GM10248 (cell line): ENCODE measurements at regions of chr2 and their contacts with region 1.

Region 1: DNA sequence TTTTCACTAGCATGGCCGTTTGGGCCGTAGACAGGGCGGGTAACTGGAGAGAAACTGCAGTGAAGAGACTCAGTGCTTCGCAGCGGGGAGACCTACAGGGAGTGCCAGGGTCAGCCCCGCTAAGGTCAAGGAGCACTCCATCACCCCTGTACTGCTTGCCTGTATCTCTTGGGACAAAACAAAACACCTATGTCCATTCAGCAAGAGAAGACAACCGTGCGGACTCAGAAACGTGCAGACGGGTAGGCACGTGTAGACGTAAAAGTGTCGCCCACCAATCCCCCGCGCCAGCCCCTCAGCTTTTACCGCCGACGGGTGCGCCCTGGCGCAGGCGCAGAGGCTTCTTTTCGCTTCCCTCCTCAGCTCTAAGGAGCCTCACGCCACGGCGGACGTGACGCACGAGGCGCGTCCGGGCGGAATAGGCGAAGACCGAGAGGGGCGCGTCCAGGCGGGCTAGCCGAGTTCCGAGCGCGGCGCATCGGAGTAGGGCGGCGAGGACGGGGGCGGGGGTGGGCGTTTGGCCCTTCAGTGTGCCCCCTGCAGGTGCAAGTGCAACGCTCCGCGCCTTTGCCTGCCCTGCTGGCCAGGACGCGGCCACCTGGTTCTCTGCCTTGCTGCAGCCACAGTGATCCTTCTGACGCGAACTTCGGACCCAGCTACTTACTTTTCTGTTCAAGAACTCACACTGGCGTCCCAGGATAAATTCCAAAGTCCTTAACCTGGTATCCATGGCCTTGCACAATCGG is 3.3 kb upstream of the SOS1 start:
- DNase-seq: peak; percentile 90
- CTCF ChIP-seq: peak; percentile 61

Region 2: GRCh38 chr2:39059366-39059952 is 64.7 kb before region 1 on chr2:
- CTCF ChIA-PET with region 1: interaction called, 11 read pairs
- POLR2A ChIA-PET with region 1: no interaction called
- DNase-seq: peak; percentile 39
- CTCF ChIP-seq: peak; percentile 62

Region 3: DNA sequence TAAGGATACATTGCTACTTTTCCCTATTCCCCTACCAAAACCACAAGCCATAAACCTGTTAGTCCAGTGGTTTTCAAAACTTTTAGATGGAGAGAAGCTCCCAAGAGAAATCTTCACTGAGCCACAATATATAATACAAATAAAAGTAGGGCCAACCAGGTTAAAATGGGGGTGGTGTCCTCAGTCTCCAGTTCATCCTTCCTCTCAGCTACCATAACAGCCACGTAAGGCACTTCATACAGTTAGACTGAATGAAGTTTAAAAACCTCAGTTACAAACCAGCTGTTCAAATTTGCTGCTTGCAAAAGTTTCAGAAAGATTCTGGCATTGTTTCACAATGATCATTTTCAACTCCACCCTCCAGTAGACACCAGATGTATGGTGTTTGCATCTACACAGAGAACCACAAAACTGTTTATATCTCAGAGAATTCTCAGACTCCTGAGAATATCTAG is 29.3 kb before region 1 on chr2:
- CTCF ChIA-PET with region 1: interaction called, 15 read pairs
- POLR2A ChIA-PET with region 1: interaction called, 3 read pairs
- DNase-seq: peak; percentile 53
- CTCF ChIP-seq: no peak

Region 4: GRCh38 chr2:39107719-39108273 is 16.4 kb before region 1 on chr2:
- CTCF ChIA-PET with region 1: interaction called, 18 read pairs
- POLR2A ChIA-PET with region 1: interaction called, 7 read pairs
- DNase-seq: no peak
- CTCF ChIP-seq: no peak

Region 5: GRCh38 chr2:39304200-39304599 is 180.0 kb after region 1 on chr2:
- CTCF ChIA-PET with region 1: no interaction called
- POLR2A ChIA-PET with region 1: no interaction called
- DNase-seq: no peak
- CTCF ChIP-seq: no peak